AG04449 (cell line): ENCODE measurements at regions of chr7 and their contacts with region 1.

Region 1: DNA sequence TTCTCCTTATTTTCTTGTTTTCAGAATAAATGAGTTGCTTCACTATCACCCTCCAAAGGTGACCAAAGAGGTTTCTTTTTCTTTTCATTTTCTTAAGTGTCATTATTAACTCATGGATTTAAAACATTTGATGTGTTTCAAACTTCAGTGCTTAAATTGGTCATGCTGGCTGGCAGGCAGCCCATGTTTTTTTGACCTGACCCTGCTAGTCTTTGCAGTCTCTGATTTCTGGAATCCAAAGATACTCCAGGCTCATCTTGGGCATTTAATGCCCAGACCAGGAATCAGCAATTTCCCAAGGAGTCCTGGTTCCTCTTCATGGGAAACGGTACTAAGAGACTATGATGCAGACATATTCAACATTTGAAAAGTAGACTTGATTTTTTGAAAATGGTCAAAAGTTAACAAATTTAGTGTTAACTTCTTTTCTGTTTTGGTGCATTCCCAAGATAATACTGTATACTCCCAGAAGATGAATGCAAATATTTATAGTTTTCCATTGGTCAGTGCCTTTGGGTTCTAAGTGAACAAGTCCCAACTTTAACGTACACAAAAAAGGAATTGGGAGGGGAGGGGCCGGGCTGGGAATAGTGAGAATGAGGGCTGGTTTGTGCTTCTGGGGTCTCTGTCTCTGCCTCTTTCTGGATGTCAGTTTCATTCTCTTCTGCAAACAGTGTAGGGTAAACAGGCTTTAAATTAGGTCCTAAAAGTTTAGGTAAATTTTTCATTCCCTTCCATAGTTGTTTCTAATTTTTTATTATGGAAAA is 19.8 kb downstream of the NUB1 start:
- DNase-seq: no peak
- H3K4me3 ChIP-seq: no peak overlapping the region
- CTCF ChIP-seq: no peak

Region 2: GRCh38 chr7:151080522-151081169 is 280.7 kb before region 1 on chr7 and contains the start of gene FASTK:
- CTCF ChIA-PET with region 1: no interaction called
- POLR2A ChIA-PET with region 1: no interaction called
- DNase-seq: peak; percentile 31
- H3K4me3 ChIP-seq: peak within 1 kb of the TSS; percentile 87
- CTCF ChIP-seq: no peak

Region 3: GRCh38 chr7:151351027-151351426 is 10.3 kb before region 1 on chr7:
- CTCF ChIA-PET with region 1: interaction called, 144 read pairs
- POLR2A ChIA-PET with region 1: interaction called, 3 read pairs
- DNase-seq: no peak
- H3K4me3 ChIP-seq: no peak overlapping the region
- CTCF ChIP-seq: peak; percentile 1

Region 4: DNA sequence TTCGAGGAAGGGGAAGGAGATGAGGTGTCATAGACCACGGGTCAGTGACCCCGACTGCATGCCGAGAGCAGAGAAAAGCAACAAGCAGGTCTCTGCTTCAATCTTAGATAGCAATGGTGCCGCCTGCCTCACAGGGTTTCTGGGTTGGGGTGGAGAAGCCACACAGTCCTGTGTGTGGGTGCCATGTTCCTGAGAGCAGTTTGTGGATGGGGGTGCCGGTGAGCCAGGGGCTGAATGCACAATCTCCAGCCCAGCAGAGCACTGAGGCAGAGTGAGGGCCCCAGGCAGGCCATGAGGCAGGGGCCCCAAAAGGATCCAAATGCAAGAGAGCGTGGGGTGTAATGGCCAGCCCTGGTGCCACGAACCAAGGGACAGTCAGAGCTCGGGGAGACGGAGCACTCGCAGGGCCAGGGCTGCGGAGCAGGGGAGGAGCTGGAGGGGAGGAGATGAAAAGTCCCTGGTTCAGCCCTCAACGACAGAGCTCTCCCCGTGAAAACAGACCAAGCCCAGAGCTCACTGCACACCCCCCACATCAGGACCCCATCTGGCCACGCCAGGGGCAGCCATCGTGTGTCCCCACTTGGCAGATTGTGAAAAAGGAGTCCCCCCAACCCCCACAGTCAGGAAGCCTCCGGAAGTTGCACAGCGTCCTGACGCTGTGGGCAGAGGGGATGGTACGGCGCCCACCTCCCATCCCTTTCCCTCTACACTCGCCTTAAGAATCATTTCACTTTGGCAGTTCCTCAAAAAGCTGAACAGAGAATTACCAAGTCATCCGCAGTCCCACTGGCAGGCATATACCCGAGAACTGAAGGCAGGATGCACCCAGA is 28.6 kb after region 1 on chr7:
- CTCF ChIA-PET with region 1: no interaction called
- POLR2A ChIA-PET with region 1: no interaction called
- DNase-seq: no peak
- H3K4me3 ChIP-seq: no peak overlapping the region
- CTCF ChIP-seq: no peak

Region 5: DNA sequence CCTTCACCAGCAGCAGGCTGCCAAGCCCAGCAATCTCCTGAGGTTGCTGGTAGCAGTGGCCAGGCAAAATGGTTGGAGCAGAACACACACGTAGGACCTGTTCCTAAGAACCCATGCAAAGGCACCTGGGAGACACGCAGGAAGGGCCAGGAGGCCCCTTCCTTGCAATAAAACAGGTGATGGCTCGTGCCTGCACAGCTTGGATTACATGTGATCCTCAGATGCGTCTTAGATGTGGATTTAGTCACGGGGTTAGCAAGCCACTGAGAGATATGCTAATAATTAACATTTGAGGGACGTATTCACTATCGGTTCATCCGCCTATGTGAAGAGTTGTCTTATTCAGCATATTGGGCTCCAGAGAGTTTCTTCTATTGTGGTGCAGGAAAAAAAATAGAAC is 162.9 kb after region 1 on chr7:
- CTCF ChIA-PET with region 1: no interaction called
- POLR2A ChIA-PET with region 1: no interaction called
- DNase-seq: no peak
- H3K4me3 ChIP-seq: no peak overlapping the region
- CTCF ChIP-seq: no peak